ENCODE measurements at regions of chr22 and their contacts with region 1.

Region 1: DNA sequence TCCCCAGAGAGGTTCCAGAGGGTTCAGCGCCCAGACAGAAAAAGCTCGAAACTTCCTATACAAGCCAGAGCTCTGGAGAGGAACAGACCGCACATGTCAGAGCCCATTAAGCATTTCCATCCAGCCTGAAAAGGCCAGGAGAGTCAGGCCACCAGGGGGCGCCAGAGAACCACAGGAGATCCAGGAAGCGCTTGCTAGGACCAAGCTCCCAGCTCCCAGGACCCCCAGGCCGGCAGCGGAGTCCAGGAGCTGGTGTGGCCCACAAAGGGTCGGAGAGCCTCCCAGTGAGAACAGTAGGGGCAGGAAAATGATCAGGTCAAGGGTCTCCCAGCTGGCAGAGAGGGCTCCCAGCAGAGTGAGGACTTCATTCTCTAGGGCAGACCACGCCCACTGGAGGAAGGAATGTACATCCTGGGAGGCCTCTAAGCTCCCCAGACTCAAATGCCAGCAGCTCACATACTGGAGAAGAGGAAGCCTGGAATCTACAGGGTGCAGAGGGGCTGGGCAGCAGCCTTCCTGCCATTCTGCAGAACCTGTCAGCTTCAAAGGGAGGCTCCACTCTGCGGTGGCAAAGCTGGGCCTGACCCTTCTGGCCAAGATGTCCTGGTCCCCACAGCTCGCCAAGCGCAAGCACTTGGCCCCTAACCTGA is 2.1 kb upstream of the MEI1 start:
- DNase-seq: peak; percentile 94
- H3K4me3 Mint-ChIP-seq: no peak overlapping the region
- H3K27ac Mint-ChIP-seq: peak overlapping the region; percentile 46
- H3K4me1 Mint-ChIP-seq: peaks cover 11% of the 10 kb centered on the region
- H3K27me3 Mint-ChIP-seq: no peaks in the 10 kb centered on the region

Region 2: GRCh38 chr22:41565403-41566054 is 131.7 kb before region 1 on chr22:
- CTCF ChIA-PET with region 1: no interaction called
- POLR2A ChIA-PET with region 1: no interaction called
- intact Hi-C with region 1: no loop called
- DNase-seq: peak; percentile 64
- H3K4me3 Mint-ChIP-seq: no peak overlapping the region
- H3K27ac Mint-ChIP-seq: peak overlapping the region; percentile 39
- H3K4me1 Mint-ChIP-seq: peaks cover 3% of the 10 kb centered on the region
- H3K27me3 Mint-ChIP-seq: peaks cover 8% of the 10 kb centered on the region

Region 3: DNA sequence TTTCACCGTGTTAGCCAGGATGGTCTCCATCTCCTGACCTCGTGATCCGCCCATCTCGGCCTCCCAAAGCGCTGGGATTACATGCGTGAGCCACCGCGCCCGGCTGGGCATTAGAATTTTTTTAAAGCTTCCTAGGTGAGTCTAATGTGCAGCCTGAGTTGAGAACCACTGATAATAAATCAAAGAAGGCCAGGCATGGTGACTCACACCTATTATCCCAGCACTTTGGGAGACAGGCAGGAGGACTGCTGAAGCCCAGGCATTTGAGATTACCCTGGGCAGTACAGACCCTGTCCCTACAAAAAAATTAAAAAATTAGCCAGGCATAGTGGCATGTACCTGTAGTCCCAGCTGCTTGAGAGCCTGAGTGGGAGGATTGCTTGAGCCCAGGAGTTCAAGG is 15.8 kb after region 1 on chr22:
- CTCF ChIA-PET with region 1: interaction called, 32 read pairs
- POLR2A ChIA-PET with region 1: no interaction called
- intact Hi-C with region 1: no loop called
- DNase-seq: no peak
- H3K4me3 Mint-ChIP-seq: no peak overlapping the region
- H3K27ac Mint-ChIP-seq: no peak overlapping the region
- H3K4me1 Mint-ChIP-seq: no peaks in the 10 kb centered on the region
- H3K27me3 Mint-ChIP-seq: no peaks in the 10 kb centered on the region

Region 4: DNA sequence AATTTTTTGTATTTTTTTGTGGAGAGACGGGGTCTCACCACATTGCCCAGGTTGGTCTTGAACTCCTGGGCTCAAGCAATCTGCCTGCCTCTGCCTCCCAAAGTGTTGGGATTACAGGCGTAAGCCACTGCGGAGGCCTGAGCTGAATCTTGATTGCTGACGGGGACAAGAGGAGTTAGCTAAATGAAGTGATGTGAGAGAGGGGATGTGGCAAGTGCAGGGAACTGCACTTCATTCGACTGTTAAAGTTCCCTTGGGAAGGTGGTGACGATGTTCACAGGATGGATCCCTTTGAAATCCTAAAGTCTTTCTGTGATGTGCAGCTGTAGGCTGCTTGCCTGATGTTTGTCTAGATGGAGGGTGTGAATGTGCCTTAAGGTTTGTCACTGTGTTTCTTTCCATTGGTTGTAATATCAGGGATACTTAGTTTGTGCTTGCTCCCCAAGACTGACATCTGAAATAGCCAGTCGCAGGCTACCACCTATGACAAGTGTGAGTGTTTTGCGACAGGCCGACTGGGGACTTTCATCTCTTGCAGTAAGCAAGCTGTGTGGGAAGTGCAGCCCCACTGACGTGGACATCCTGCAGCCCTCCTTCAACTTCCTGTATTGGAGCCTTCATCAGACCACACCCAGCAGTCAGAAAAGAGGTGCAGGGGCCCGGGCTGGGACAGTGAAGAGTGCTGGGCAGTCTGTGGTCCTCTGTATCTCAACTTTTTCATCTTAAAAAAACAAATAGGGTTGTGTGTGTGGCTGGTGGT is 83.7 kb after region 1 on chr22:
- CTCF ChIA-PET with region 1: interaction called, 32 read pairs
- POLR2A ChIA-PET with region 1: interaction called, 6 read pairs
- intact Hi-C with region 1: loop called (anchors 5 kb)
- DNase-seq: peak; percentile 96
- H3K4me3 Mint-ChIP-seq: peak overlapping the region; percentile 84
- H3K27ac Mint-ChIP-seq: peak overlapping the region; percentile 92
- H3K4me1 Mint-ChIP-seq: peaks cover 43% of the 10 kb centered on the region
- H3K27me3 Mint-ChIP-seq: no peaks in the 10 kb centered on the region

Region 5: GRCh38 chr22:41800348-41801146 is 103.3 kb after region 1 on chr22 and contains the start of gene CCDC134:
- CTCF ChIA-PET with region 1: interaction called, 43 read pairs
- POLR2A ChIA-PET with region 1: interaction called, 13 read pairs
- intact Hi-C with region 1: no loop called
- DNase-seq: peak; percentile 95
- H3K4me3 Mint-ChIP-seq: peak within 1 kb of the TSS; percentile 98
- H3K27ac Mint-ChIP-seq: peak within 1 kb of the TSS; percentile 95
- H3K4me1 Mint-ChIP-seq: peaks cover 35% of the 10 kb centered on the region
- H3K27me3 Mint-ChIP-seq: no peaks in the 10 kb centered on the region
- total RNA-seq, gene CCDC134: 16.1 to 17.6 TPM

Region 6: GRCh38 chr22:41857155-41857859 is 160.1 kb after region 1 on chr22:
- CTCF ChIA-PET with region 1: interaction called, 16 read pairs
- POLR2A ChIA-PET with region 1: interaction called, 5 read pairs
- intact Hi-C with region 1: loop called (anchors 5 kb)
- DNase-seq: peak; percentile 89
- H3K4me3 Mint-ChIP-seq: peak overlapping the region; percentile 28
- H3K27ac Mint-ChIP-seq: peak overlapping the region; percentile 95
- H3K4me1 Mint-ChIP-seq: peaks cover 80% of the 10 kb centered on the region
- H3K27me3 Mint-ChIP-seq: no peaks in the 10 kb centered on the region

Region 7: GRCh38 chr22:41951898-41952474 is 254.7 kb after region 1 on chr22 and contains the start of gene SMIM45:
- CTCF ChIA-PET with region 1: interaction called, 12 read pairs
- POLR2A ChIA-PET with region 1: no interaction called
- intact Hi-C with region 1: loop called (anchors 5 kb)
- DNase-seq: no peak
- H3K4me3 Mint-ChIP-seq: no peak within 1 kb of the TSS
- H3K27ac Mint-ChIP-seq: no peak within 1 kb of the TSS
- H3K4me1 Mint-ChIP-seq: peaks cover 20% of the 10 kb centered on the region
- H3K27me3 Mint-ChIP-seq: no peaks in the 10 kb centered on the region

Measured in activated CD4-positive, alpha-beta memory T cell treated with anti-CD3 and anti-CD28 coated beads for 36 hours (primary cell).